PC-9 (cell line): ENCODE measurements at regions of chr22 and their contacts with region 1.

Region 1: DNA sequence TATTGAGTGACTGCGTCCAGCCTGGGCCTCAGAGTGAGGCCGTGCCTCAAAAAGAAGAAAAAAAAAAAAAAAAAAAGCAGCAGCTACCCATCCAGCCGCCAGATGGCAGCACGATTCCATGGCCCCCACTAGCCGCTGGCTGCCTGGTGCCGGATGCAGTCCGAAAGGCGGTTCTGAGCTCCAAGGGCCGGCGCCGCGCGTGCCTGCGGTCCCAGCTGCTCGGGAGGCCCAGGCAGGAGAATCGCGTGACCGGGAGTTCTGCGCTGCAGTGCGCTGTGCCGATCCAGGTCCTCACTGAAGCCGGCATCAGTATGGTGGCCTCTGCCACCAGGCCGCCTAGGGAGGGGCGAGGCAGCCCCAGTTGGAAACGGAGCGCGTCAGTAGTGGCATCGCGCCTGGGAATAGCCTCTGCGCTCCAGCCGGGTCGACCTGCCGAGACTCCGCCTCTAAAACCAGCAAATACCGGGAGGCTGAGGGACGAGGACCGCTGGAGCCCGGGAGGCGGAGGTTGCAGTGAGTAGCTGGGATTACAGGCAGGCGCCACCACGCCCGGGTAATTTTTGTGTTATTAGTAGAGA is 19.3 kb downstream of the SCARF2 start:
- DNase-seq: peak in 1 of 2 experiments; percentile 50
- H3K4me3 ChIP-seq: peak overlapping the region; percentile 46; the same call in 1 of the 2 replicates
- H3K27ac ChIP-seq: no peak overlapping the region
- H3K4me1 ChIP-seq: no peaks in the 10 kb centered on the region
- H3K27me3 ChIP-seq: no peaks in the 10 kb centered on the region
- CTCF ChIP-seq: peak; percentile 83

Region 2: GRCh38 chr22:20156611-20157429 is 261.5 kb before region 1 on chr22:
- CTCF ChIA-PET with region 1: no interaction called
- POLR2A ChIA-PET with region 1: no interaction called
- intact Hi-C with region 1: loop called (anchors 5 kb)
- DNase-seq: peak; percentile 38 to 73
- H3K4me3 ChIP-seq: no peak overlapping the region
- H3K27ac ChIP-seq: no peak overlapping the region
- H3K4me1 ChIP-seq: no peaks in the 10 kb centered on the region
- H3K27me3 ChIP-seq: peaks cover 15% of the 10 kb centered on the region
- CTCF ChIP-seq: peak; percentile 97

Region 3: GRCh38 chr22:20268279-20269012 is 149.9 kb before region 1 on chr22 and contains the start of gene RTN4R:
- CTCF ChIA-PET with region 1: no interaction called
- POLR2A ChIA-PET with region 1: no interaction called
- intact Hi-C with region 1: no loop called
- DNase-seq: peak in 1 of 2 experiments; percentile 56
- H3K4me3 ChIP-seq: peak within 1 kb of the TSS; percentile 45; the same call in 1 of the 2 replicates
- H3K27ac ChIP-seq: no peak within 1 kb of the TSS
- H3K4me1 ChIP-seq: no peaks in the 10 kb centered on the region
- H3K27me3 ChIP-seq: no peaks in the 10 kb centered on the region
- CTCF ChIP-seq: no peak; the same call in 1 of the 2 replicates
- total RNA-seq, gene RTN4R: 5.0 and 7.0 TPM in 2 replicates

Region 4: GRCh38 chr22:20388200-20388599 is 30.1 kb before region 1 on chr22:
- CTCF ChIA-PET with region 1: interaction called, 13 read pairs
- POLR2A ChIA-PET with region 1: no interaction called
- intact Hi-C with region 1: no loop called
- DNase-seq: no peak
- H3K4me3 ChIP-seq: no peak overlapping the region
- H3K27ac ChIP-seq: no peak overlapping the region
- H3K4me1 ChIP-seq: no peaks in the 10 kb centered on the region
- H3K27me3 ChIP-seq: peaks cover 11% of the 10 kb centered on the region; the same call in 1 of the 2 replicates
- CTCF ChIP-seq: no peak

Region 5: DNA sequence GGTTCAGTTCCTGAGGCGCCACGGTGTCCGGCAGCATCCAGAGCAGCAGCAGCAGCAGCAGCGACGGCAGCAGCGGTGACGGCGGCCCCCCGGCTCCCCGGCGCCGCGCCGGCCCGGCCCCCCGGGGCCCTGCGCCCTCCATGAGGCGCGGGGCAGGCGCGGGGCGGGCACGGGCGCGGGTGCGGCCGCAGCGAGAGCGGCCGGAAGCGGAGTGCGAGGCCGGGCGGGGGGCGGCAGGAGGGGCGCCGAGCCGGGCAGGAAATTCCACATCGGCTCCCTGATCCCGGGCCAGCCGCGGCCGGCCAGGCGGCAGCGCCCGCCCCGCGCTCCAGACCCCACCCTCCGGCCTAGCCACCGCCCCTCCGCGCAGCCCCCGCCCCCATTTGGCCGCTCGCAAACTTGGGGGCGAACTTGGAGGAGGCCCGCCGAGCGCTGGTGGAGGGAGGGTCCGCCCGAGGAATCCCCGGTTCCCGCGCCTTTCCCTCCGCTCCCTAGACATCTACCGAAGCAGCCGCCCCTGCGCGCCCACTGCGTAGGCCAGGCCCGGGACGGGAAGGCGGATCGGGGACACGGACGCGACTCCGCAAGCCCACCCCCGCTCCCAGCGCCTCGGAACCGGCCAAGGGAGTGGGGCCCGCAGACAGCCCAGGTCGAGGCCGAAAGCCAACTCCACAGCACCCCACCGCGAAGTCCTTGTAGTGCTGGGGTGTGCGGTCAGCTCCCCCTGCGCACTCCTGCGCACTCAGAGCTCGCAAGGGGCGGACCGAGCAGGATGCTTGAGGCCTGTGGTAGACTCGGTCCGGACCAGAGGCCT is 19.5 kb after region 1 on chr22 and contains the start of gene SCARF2:
- CTCF ChIA-PET with region 1: no interaction called
- POLR2A ChIA-PET with region 1: no interaction called
- intact Hi-C with region 1: no loop called
- DNase-seq: no peak
- H3K4me3 ChIP-seq: no peak within 1 kb of the TSS
- H3K27ac ChIP-seq: no peak within 1 kb of the TSS
- H3K4me1 ChIP-seq: no peaks in the 10 kb centered on the region
- H3K27me3 ChIP-seq: no peaks in the 10 kb centered on the region
- CTCF ChIP-seq: no peak
- total RNA-seq, gene SCARF2: 0.52 and 1.7 TPM in 2 replicates

Region 6: GRCh38 chr22:20495861-20496681 is 77.8 kb after region 1 on chr22:
- CTCF ChIA-PET with region 1: no interaction called
- POLR2A ChIA-PET with region 1: interaction called, 24 read pairs
- intact Hi-C with region 1: no loop called
- DNase-seq: peak; percentile 66 to 88
- H3K4me3 ChIP-seq: peak overlapping the region; percentile 78
- H3K27ac ChIP-seq: peak overlapping the region; percentile 73
- H3K4me1 ChIP-seq: no peaks in the 10 kb centered on the region
- H3K27me3 ChIP-seq: no peaks in the 10 kb centered on the region
- CTCF ChIP-seq: peak; percentile 83

Region 7: GRCh38 chr22:20624161-20624616 is 205.9 kb after region 1 on chr22:
- CTCF ChIA-PET with region 1: interaction called, 15 read pairs
- POLR2A ChIA-PET with region 1: no interaction called
- intact Hi-C with region 1: no loop called
- DNase-seq: no peak
- H3K4me3 ChIP-seq: no peak overlapping the region
- H3K27ac ChIP-seq: no peak overlapping the region
- H3K4me1 ChIP-seq: no peaks in the 10 kb centered on the region
- H3K27me3 ChIP-seq: peaks cover 13% of the 10 kb centered on the region; the same call in 1 of the 2 replicates
- CTCF ChIP-seq: no peak